Sciatic nerve (tissue), 2 donors: ENCODE measurements at regions of chr13 and their contacts with region 1.

Region 1: GRCh38 chr13:110412132-110412914 is 105.2 kb downstream of the COL4A2 start:
- DNase-seq: peak; percentile 91
- ATAC-seq: peak; percentile 94

Region 2: DNA sequence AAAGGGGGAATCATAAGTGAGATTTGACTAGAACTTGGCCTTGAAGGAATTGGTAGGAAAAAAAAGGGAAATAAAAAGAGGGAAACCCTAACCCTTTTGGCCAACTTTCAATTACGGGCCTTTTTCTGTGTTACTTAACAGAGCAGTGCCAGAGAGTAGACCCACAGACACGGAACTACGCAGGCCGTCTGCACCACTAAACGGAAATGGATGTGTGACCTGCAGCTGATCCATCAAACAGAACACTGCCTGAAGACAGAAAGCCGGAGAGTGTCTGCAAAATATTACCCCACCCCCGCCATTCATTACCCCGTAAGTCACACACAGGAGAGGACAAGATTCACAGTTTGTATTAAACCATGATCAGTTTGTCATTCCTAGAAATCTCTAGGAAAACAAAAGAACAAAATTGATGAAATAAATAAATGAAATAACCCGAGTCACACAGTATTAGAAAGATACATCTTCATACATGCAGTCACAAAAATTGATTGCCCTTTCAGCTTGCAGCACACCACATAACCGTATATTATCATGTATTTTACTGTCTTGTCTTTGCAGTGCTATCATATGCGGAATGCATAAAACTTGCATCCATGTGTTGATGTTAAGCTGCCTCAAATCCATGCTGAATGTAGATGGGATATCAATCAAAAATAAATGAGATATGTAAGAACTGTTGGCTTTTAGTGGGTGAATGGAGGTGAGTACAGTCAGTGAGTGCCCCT is 1050.6 kb before region 1 on chr13:
- intact Hi-C with region 1: no loop called
- DNase-seq: no peak
- ATAC-seq: no peak

Region 3: GRCh38 chr13:110225609-110226562 is 186.4 kb before region 1 on chr13:
- intact Hi-C with region 1: loop called (anchors 10 kb)
- DNase-seq: no peak
- ATAC-seq: no peak

Region 4: GRCh38 chr13:110382229-110382628 is 30.1 kb before region 1 on chr13:
- intact Hi-C with region 1: loop called (anchors 1 kb)
- DNase-seq: no peak
- ATAC-seq: no peak

Region 5: DNA sequence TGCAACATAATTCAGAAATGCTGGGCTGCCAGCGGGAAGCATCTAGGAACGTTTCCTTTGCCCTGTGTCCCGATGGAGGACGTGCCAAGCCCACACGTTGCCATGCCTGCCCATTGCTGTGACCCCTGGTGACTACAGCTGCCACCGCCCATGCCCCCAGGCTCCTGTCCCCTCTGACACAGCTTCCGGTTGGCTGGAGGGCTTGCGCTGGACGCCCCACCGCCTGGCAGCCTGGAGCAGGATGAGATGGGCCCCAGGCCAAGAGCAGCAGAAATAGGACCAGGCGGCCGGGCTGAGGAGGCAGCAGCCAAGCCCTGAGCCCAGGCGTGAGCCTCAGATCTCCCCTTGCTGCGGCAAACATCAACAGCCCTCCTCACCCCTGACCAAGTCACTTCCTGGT is 20.7 kb after region 1 on chr13:
- intact Hi-C with region 1: loop called (anchors 1 kb)
- DNase-seq: no peak
- ATAC-seq: peak; percentile 69